ENCODE measurements at regions of chr2 and their contacts with region 1.

Region 1: DNA sequence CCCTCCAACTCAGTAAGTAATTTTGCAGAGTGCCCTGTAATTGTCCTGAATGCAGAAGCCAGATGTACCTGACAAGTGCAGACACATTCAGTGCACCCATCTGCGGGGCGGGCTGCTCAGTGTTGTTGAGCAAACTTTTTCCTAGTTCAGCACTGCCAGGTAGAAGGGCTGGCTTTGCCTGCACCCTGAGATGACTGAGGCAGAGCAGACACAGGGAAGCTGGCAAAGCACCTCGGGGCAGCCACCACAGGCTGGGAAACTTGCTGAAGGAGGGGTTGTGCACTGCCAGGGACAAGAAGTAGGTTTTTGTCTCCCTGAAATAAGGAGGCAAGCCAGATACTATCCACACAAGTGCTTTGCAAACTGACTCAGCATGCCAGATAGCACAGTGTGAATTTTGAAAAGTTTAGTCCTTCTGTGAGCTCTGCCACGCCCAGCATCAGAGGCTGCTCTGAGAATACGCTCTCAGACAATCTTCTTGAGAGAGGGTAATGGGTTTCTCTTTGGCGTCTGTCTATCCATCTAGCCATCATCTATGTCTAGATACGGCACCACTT is 62.3 kb downstream of the SOWAHC start:
- DNase-seq: no peak
- ATAC-seq: no peak
- H3K4me3 ChIP-seq: no peak overlapping the region
- H3K27ac ChIP-seq: no peak overlapping the region
- H3K4me1 ChIP-seq: peaks cover 2% of the 10 kb centered on the region; the same call in 1 of the 2 replicates
- H3K27me3 ChIP-seq: peaks cover 44% of the 10 kb centered on the region
- CTCF ChIP-seq: no peak
- POLR2A ChIP-seq: no peak
- RAD21 ChIP-seq: no peak

Region 2: DNA sequence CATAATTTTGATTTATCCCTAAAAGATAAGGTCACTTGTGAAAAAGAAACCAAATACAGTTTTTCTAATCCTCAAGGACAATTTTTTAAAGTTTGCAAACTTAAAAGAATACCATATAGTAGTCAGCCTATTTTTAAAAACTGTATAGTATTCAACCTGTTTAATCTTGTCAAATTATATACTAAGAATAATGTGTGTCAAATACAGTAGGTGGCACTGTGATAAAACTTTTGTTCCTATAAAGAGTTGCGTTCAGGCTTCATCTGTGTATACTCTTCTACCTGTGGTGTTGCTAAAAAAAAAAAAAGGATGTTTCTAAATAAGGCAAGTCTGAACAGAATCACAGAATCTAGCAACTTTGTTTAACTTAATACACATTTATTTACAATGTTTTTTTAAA is 821.2 kb before region 1 on chr2:
- CTCF ChIA-PET with region 1: no interaction called
- POLR2A ChIA-PET with region 1: no interaction called
- dilution Hi-C with region 1: no loop called
- in situ Hi-C with region 1: no loop called
- intact Hi-C with region 1: no loop called
- DNase-seq: peak; percentile 8
- ATAC-seq: peak; percentile 46; the same call in 1 of the 2 replicates
- H3K4me3 ChIP-seq: no peak overlapping the region
- H3K27ac ChIP-seq: no peak overlapping the region
- H3K4me1 ChIP-seq: no peaks in the 10 kb centered on the region
- H3K27me3 ChIP-seq: no peaks in the 10 kb centered on the region
- CTCF ChIP-seq: 0 out of 2 replicates have a peak, but pooled peaks have one; percentile 22
- POLR2A ChIP-seq: no peak
- RAD21 ChIP-seq: no peak; the same call in 1 of the 2 replicates

Region 3: DNA sequence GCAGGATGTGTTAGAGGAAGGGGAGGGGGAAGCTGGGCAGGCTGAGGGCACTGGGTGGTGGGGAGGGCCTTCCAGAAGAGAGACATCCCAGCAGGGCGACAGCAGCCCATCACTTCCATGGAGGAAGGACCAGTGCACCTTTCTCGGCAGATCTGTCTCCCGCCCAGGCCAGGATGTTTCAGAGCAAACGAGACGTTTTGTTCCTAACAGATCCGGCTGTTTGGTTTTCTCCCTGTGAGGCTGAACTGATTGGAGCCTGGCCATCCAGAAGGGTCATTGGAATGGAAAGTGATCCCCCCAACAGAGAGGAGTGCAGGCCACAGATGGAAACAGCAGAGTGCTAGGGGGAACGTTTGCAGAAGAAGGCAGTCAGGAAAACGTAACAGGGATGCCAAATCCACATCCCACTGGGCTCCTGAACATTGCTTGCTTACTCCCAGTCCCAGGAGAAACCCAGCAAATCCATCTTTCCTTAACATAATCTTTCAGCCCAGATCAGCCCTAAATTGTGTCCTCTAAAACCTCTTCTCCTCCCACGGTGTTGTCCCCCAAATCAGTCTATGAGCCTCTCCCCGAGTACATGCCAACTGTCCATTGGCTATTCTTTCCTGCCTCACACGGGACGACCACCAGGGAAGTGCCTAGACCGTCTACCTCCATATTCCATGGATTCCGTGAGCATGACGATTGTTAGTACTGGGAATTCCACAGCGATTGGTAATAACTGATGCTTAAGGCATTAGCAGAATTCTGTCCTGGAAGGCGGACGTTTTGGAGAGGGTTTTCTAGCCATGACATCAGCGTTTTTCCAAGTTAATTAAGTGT is 189.5 kb before region 1 on chr2:
- CTCF ChIA-PET with region 1: no interaction called
- POLR2A ChIA-PET with region 1: no interaction called
- dilution Hi-C with region 1: no loop called
- in situ Hi-C with region 1: no loop called
- intact Hi-C with region 1: no loop called
- DNase-seq: peak; percentile 95
- ATAC-seq: peak; percentile 93
- H3K4me3 ChIP-seq: no peak overlapping the region
- H3K27ac ChIP-seq: peak overlapping the region; percentile 87
- H3K4me1 ChIP-seq: peaks cover 35% of the 10 kb centered on the region
- H3K27me3 ChIP-seq: no peaks in the 10 kb centered on the region
- CTCF ChIP-seq: no peak
- POLR2A ChIP-seq: no peak
- RAD21 ChIP-seq: no peak

Region 4: GRCh38 chr2:109694199-109694598 is 17.8 kb after region 1 on chr2:
- CTCF ChIA-PET with region 1: no interaction called
- POLR2A ChIA-PET with region 1: no interaction called
- dilution Hi-C with region 1: no loop called
- in situ Hi-C with region 1: no loop called
- intact Hi-C with region 1: loop called (anchors 2 kb)
- DNase-seq: no peak
- ATAC-seq: peak; percentile 54
- H3K4me3 ChIP-seq: no peak overlapping the region
- H3K27ac ChIP-seq: no peak overlapping the region
- H3K4me1 ChIP-seq: peaks cover 4% of the 10 kb centered on the region; the same call in 1 of the 2 replicates
- H3K27me3 ChIP-seq: peaks cover 4% of the 10 kb centered on the region
- CTCF ChIP-seq: no peak
- POLR2A ChIP-seq: no peak
- RAD21 ChIP-seq: no peak

Region 5: GRCh38 chr2:109702618-109702985 is 26.2 kb after region 1 on chr2:
- CTCF ChIA-PET with region 1: no interaction called
- POLR2A ChIA-PET with region 1: no interaction called
- dilution Hi-C with region 1: no loop called
- in situ Hi-C with region 1: no loop called
- intact Hi-C with region 1: loop called (anchors 2 kb)
- DNase-seq: peak; percentile 63
- ATAC-seq: peak; percentile 22; the same call in 1 of the 2 replicates
- H3K4me3 ChIP-seq: no peak overlapping the region
- H3K27ac ChIP-seq: no peak overlapping the region
- H3K4me1 ChIP-seq: peaks cover 5% of the 10 kb centered on the region
- H3K27me3 ChIP-seq: no peaks in the 10 kb centered on the region; the same call in 1 of the 2 replicates
- CTCF ChIP-seq: no peak
- POLR2A ChIP-seq: no peak
- RAD21 ChIP-seq: no peak

Region 6: DNA sequence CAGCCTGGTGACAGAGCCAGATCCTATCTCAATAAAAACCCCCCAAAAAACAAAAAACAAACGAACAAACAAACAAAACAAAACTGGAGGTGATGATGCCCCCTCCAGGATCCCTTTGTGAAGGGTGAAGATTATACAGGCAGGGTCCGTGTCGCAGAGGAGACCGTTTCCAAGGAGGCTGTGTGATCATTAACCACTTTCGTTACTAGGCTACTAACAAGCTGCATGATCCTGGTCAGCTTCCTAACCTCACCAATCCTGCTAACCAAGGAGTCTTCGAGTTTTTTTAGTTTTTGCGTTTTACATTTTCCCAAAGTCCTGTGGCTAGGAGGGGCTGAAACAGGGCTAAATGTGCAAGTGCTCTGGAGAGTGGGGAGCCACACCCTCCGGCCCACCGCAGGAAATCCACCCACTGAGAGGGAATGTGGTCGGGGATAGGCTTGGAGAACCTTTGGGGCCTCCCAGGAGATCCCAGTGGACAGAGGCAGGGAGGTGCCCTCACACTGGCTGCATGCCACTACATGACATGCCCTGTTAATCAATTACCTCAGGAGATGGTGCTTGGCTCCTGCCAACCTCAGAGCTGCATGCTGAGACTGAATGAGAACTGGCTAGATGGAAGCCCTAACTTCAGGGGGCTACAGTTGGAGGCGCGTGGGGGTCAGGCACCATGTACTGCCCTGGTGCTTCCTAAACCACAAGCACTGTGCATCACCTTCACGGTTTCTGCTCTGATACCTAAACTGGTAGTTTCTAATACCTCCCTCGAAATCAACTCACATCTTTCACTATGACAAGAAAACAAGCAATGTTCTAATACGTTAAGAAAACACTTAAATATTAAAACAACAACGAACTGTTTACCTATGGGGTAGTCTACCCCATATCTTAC is 50.2 kb after region 1 on chr2:
- CTCF ChIA-PET with region 1: no interaction called
- POLR2A ChIA-PET with region 1: no interaction called
- dilution Hi-C with region 1: no loop called
- in situ Hi-C with region 1: no loop called
- intact Hi-C with region 1: no loop called
- DNase-seq: no peak
- ATAC-seq: no peak
- H3K4me3 ChIP-seq: no peak overlapping the region
- H3K27ac ChIP-seq: no peak overlapping the region
- H3K4me1 ChIP-seq: no peaks in the 10 kb centered on the region
- H3K27me3 ChIP-seq: peaks cover 40% of the 10 kb centered on the region
- CTCF ChIP-seq: no peak
- POLR2A ChIP-seq: no peak
- RAD21 ChIP-seq: no peak

Region 7: GRCh38 chr2:110157153-110157793 is 480.8 kb after region 1 on chr2:
- CTCF ChIA-PET with region 1: no interaction called
- POLR2A ChIA-PET with region 1: no interaction called
- dilution Hi-C with region 1: no loop called
- in situ Hi-C with region 1: no loop called
- intact Hi-C with region 1: no loop called
- DNase-seq: peak; percentile 77
- ATAC-seq: peak; percentile 94
- H3K4me3 ChIP-seq: no peak overlapping the region
- H3K27ac ChIP-seq: no peak overlapping the region
- H3K4me1 ChIP-seq: no peaks in the 10 kb centered on the region
- H3K27me3 ChIP-seq: no peaks in the 10 kb centered on the region
- CTCF ChIP-seq: peak; percentile 91
- POLR2A ChIP-seq: no peak
- RAD21 ChIP-seq: peak; percentile 92

Measured in IMR-90 (cell line).